ENCODE measurements at regions of chr1 and their contacts with region 1.

Region 1: GRCh38 chr1:182279724-182280503 is 111.7 kb downstream of the GLUL start:
- DNase-seq: no peak

Region 2: DNA sequence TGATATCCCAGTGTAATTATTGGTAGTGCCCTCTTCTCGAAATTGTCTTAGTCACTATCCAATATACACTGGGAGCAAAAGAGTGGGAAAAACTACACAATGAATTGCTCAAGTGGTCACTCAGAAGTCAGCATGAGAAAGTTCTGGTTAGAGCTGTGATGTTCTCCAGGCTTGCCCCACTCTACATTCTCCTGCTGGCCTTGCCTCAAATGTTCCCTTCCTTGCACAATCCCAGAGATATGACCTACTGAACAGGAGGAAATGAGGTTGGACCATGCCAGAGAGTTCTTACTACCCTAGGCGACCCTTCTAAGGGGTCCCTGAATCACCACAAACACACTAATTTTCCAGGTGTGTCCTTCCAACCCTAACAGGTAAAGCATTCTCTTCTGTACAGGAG is 70.9 kb after region 1 on chr1:
- intact Hi-C with region 1: loop called in 1 of 2 experiments (anchors 10 kb)
- DNase-seq: no peak